Activated naive CD4-positive, alpha-beta T cell treated with anti-CD3 and anti-CD28 coated beads for 36 hours (primary cell): ENCODE measurements at regions of chr14 and their contacts with region 1.

Region 1: DNA sequence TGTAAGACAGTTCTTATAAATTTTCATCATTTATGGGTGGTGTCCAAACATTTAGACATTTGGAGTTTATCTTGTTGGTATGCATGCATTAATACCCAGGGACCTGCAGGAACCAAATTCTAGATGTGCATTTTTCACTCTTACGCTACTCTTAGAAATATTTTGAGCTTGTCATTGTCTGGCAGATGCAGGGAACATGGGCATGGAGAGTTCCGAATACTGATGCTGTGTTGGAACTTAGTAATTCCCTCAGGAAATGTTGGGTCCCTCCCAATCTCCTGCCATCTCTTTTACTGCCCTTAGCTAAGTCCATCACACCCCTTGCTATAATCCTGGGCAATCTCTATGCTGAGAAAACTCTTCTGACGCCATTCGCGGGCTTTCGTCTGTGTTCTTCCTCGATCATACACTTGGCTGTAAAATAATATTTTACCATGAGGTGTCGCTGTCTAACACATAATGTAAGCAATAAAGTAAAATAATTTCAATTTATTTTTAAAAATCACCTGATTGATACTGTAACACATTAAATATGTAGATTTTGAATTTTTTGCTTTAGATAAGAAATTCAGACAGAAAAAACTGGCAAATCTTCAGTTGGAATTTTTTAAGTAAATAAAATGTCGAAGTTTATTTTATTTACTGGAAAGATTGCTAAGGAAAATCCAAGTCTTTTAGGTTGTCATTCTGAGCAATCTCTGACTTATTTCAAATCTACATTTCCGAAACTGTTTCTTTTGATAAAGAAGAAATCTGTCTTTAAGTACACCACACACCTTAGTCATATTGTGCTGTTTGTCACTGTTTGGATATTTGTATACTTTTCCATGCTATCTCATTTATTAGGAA is 304.1 kb upstream of the SSTR1 start:
- DNase-seq: peak; percentile 9
- H3K4me3 Mint-ChIP-seq: no peak overlapping the region
- H3K27ac Mint-ChIP-seq: no peak overlapping the region
- H3K4me1 Mint-ChIP-seq: peaks cover 2% of the 10 kb centered on the region
- H3K27me3 Mint-ChIP-seq: peaks cover 16% of the 10 kb centered on the region

Region 2: DNA sequence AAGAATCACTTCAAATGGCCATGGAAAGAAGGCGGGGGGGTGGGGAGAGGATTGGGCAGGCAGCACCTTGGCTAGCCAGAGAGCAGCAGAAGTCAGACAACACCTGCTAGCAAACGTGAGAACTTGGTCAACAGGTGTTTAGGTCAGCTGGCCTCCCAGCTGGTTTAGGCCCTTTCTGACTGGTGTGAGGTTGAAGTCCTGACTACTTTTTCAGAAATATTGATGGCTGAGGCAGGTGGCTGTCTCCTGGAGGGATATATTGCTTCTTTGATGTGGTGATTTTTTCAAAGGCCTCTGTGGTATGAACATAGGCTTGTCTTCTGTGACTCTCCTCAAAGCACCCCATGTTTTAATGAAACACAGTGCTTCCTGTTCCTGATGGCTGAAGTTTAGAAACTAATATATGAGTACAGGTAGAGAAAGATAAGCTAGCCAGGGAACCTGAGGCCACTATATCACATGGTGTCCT is 66.0 kb after region 1 on chr14:
- CTCF ChIA-PET with region 1: no interaction called
- intact Hi-C with region 1: no loop called
- DNase-seq: no peak
- H3K4me3 Mint-ChIP-seq: no peak overlapping the region
- H3K27ac Mint-ChIP-seq: no peak overlapping the region
- H3K4me1 Mint-ChIP-seq: peaks cover 10% of the 10 kb centered on the region
- H3K27me3 Mint-ChIP-seq: no peaks in the 10 kb centered on the region

Region 3: DNA sequence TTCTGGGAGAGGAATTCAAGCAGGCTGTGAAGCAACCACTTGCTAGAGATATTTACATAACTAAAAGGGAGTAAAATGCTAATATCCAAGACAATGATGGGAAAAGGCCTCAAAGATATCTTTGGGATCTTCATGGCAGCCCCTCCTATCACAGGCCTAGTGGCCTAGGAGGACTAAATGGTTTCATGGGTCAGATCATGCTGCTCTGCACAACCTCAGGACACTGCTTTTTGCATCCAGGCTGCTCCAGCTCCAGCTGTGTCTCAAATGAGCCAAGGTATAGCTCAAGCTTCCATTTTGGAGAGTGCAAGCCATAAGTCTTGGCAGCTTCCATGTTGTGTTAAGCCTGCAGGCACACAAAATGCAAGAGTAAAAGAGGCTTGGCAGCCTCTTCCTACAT is 108.5 kb after region 1 on chr14:
- CTCF ChIA-PET with region 1: no interaction called
- intact Hi-C with region 1: no loop called
- DNase-seq: no peak
- H3K4me3 Mint-ChIP-seq: no peak overlapping the region
- H3K27ac Mint-ChIP-seq: no peak overlapping the region
- H3K4me1 Mint-ChIP-seq: no peaks in the 10 kb centered on the region
- H3K27me3 Mint-ChIP-seq: no peaks in the 10 kb centered on the region

Region 4: GRCh38 chr14:38197001-38197783 is 293.6 kb after region 1 on chr14:
- CTCF ChIA-PET with region 1: interaction called, 4 read pairs
- intact Hi-C with region 1: loop called (anchors 1 kb)
- DNase-seq: no peak
- H3K4me3 Mint-ChIP-seq: no peak overlapping the region
- H3K27ac Mint-ChIP-seq: no peak overlapping the region
- H3K4me1 Mint-ChIP-seq: peaks cover 5% of the 10 kb centered on the region
- H3K27me3 Mint-ChIP-seq: no peaks in the 10 kb centered on the region

Region 5: DNA sequence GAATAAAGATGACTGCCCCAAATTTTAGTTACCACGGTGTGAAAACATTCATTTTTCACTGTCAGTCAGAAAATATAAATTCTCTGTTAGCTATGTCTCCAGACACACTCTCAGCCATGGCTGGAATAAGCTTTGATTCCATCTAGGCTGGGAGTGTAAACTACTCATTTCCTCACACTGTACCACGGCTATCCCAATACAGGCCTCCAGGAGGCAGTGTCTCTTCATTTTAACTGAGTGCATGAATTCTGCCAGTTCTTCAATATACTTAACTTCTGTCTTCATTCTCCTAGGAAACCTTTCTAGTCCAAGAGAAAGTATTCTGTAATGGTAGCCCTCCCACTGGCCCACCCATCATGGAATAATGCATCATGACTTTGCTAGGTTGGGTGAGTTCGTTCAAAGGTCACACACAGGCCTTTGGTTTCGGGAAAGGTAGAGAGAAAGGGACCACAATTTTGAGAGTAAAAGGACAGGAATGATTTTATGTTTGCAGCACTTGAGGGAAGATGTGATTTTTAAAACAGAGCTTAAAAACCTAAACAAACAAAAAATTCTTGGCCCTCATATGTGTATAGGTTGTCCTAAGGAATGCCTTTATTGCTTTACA is 818.4 kb after region 1 on chr14:
- CTCF ChIA-PET with region 1: no interaction called
- intact Hi-C with region 1: loop called (anchors 5 kb)
- DNase-seq: peak; percentile 64
- H3K4me3 Mint-ChIP-seq: no peak overlapping the region
- H3K27ac Mint-ChIP-seq: no peak overlapping the region
- H3K4me1 Mint-ChIP-seq: no peaks in the 10 kb centered on the region
- H3K27me3 Mint-ChIP-seq: peaks cover 2% of the 10 kb centered on the region

Region 6: GRCh38 chr14:38867561-38868150 is 964.1 kb after region 1 on chr14:
- CTCF ChIA-PET with region 1: interaction called, 10 read pairs
- intact Hi-C with region 1: loop called (anchors 1 kb)
- DNase-seq: peak; percentile 80
- H3K4me3 Mint-ChIP-seq: no peak overlapping the region
- H3K27ac Mint-ChIP-seq: no peak overlapping the region
- H3K4me1 Mint-ChIP-seq: no peaks in the 10 kb centered on the region
- H3K27me3 Mint-ChIP-seq: peaks cover 5% of the 10 kb centered on the region